AG04450 (cell line): ENCODE measurements at regions of chr10 and their contacts with region 1.

Region 1: DNA sequence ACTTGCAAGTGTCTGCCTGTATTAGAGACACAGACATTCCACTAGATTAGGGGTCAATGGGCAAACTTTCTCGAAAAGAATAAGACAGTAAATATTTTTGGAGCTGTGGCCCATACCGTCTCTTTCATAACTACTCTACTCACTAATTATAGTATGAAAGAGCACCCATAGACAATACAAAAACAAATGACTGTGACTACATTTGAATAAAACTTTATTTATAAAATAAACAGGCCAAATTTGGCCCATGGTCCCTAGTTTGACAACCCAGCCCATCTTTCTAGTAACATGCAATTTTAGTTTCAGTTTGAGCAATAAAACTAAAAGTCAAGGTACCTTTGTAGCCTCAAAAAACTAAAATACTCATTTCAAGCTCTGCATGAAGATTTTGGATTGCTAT is 294.6 kb downstream of the PARD3 start:
- DNase-seq: no peak
- H3K4me3 ChIP-seq: no peak overlapping the region
- H3K27ac ChIP-seq: no peak overlapping the region
- H3K27me3 ChIP-seq: no peaks in the 10 kb centered on the region
- CTCF ChIP-seq: no peak

Region 2: GRCh38 chr10:34081948-34082347 is 438.6 kb before region 1 on chr10:
- CTCF ChIA-PET with region 1: interaction called, 10 read pairs
- POLR2A ChIA-PET with region 1: no interaction called
- DNase-seq: no peak
- H3K4me3 ChIP-seq: no peak overlapping the region
- H3K27ac ChIP-seq: no peak overlapping the region
- H3K27me3 ChIP-seq: peaks cover 4% of the 10 kb centered on the region
- CTCF ChIP-seq: no peak

Region 3: DNA sequence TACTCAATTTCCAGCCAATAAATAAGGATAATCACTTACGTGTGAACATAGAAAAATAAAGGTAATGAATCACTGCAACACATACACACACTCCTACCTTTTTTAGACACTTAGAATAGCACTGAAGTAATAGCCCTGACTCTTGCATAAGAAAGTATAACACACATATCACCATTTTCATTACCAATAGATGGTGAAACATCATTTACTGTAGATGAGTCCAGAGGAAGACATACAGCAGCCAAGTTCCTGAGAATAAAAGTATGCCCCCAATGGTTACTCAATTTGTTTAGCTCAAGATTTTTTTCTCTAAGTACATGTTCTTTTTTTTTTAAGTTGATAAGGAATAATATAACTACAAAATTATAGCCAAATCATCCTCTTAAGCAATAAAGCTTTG is 21.7 kb before region 1 on chr10:
- CTCF ChIA-PET with region 1: no interaction called
- POLR2A ChIA-PET with region 1: no interaction called
- DNase-seq: no peak
- H3K4me3 ChIP-seq: no peak overlapping the region
- H3K27ac ChIP-seq: no peak overlapping the region
- H3K27me3 ChIP-seq: no peaks in the 10 kb centered on the region
- CTCF ChIP-seq: no peak

Region 4: DNA sequence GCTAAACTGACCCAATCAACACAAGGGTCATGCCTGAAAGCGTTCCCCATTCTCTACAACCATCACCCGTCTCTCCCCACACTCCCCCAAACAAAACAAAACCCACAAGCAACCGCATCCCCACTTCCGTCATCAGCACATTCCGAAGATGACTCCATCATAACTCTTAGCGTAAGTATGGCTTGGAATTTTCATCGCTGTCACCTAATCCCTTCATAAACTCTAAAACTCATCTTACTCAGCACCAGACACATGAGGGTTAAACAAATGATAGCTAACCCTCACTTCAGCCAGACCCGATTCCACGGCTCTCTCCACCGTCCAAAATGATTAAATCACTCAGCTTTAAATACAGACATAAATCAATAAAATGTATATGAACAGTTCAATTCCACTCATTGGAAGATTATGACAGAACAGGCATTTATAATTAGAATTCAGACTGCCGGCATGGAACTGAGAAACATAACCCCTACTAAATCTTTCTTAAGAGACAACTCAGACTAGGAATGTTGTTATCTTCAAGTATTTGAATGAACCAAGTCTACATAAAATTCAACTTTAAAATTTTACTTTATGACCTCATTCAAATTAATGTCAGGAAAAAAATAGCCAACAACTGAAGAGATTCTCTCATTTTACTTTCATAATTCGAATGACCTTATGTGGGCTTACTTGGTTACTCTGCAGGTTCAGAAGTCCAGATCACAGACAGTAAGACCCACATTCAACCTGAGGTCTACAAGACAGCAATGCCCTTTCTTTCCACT is 78.7 kb after region 1 on chr10:
- CTCF ChIA-PET with region 1: no interaction called
- POLR2A ChIA-PET with region 1: no interaction called
- DNase-seq: peak; percentile 59
- H3K4me3 ChIP-seq: no peak overlapping the region
- H3K27ac ChIP-seq: peak overlapping the region; percentile 48
- H3K27me3 ChIP-seq: no peaks in the 10 kb centered on the region
- CTCF ChIP-seq: no peak